Dendritic cell treated with granulocyte-macrophage colony-stimulating factor and Interleukin-4, amounts not matched to agents 40 ng/mL and 50 ng/mL, for 4 days (primary cell): ENCODE measurements at regions of chr17 and their contacts with region 1.

Region 1: DNA sequence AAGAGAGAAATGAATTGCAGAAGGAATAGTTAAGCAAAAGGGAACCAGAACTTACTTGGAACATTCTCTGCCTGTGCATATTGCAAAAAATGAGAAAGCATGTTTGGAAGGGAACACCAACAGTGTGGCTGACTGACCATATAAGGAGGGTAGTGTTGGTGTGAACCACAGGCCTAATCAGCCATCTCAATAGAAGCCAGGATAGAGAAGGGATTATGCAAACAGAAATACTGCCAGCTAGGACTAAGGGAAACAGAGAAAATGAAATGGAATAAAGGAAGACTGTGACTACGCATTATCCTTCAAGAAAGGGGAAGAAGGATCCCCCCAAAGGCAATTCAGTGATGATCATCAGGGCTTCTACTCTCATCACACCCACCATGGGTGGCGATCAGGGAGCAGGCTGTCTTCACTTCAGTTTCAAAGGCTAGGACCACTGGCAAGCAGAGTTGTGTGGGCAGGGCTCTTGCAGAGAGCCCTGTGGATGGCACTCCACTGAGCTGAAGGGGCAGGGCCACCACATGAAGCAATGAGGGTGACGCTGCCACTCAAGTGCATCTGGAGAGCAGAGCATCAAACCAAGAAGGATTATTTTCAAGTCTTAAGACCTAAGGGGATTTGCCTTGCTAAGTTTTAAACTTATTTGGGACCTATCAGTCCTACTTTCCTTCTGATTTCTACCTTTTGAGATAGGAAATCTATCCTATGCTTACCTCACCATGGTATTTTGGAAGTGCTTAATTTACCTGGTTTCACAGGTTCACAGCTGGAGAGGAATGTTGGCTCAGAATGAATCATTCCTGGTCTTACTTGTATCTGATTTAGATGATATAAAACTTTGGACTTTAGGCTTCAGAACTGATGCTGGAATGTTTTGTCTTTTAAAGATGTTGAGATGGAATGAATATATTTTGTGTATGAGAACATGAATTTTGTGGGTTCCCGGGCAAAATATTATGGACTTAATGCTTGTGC is 140.5 kb downstream of the SSH2 start:
- H3K4me3 Mint-ChIP-seq: no peak overlapping the region
- H3K27ac Mint-ChIP-seq: peak overlapping the region; percentile 74
- H3K4me1 Mint-ChIP-seq: peaks cover 46% of the 10 kb centered on the region
- H3K27me3 Mint-ChIP-seq: no peaks in the 10 kb centered on the region

Region 2: DNA sequence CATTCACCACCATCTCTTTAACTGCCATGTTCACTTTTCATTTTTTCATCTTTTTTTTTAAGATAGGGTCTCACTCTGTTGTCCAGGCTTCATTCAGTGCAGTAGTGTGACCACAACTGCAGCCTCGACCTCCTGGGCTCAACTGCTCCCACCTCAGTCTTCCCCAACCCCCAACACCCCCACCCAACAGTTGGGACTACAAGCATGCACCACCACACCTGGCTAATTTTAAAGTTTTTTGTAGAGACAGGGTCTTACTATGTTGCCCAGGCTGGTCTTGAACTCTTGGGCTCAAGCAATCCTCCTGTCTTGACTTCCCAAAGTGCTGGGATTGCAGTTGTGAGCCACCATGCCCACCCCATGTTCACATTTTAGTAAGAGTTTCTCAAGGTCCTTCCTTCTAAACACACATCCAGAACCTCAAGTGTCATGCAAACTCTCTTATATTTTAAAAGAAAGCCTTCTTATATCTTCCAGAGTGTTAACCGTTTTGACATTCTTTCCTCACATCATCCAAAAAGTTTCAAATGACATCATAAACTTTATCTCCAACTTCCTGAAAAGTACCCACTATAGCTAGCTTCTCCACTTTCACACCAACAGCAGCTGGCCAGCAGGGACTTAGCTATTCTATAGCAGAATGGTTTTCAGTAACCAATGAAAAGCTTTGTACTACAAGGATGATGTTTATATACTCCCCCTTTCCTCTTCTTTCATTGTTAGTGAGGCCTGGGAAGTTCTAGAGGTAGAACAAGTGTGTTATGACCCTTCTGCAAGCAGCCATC is 996.4 kb before region 1 on chr17:
- intact Hi-C with region 1: loop called (anchors 10 kb)
- H3K4me3 Mint-ChIP-seq: no peak overlapping the region
- H3K27ac Mint-ChIP-seq: no peak overlapping the region
- H3K4me1 Mint-ChIP-seq: peaks cover 6% of the 10 kb centered on the region
- H3K27me3 Mint-ChIP-seq: no peaks in the 10 kb centered on the region